ENCODE measurements at regions of chr20 and their contacts with region 1.

Region 1: GRCh38 chr20:38073307-38074071 is 39.9 kb downstream of the RPRD1B start:
- DNase-seq: no peak

Region 2: GRCh38 chr20:37935435-37935834 is 138.1 kb before region 1 on chr20:
- intact Hi-C with region 1: no loop called
- DNase-seq: no peak

Region 3: GRCh38 chr20:38127011-38127621 is 53.6 kb after region 1 on chr20:
- intact Hi-C with region 1: loop called (anchors 5 kb)
- DNase-seq: peak; percentile 75

Region 4: DNA sequence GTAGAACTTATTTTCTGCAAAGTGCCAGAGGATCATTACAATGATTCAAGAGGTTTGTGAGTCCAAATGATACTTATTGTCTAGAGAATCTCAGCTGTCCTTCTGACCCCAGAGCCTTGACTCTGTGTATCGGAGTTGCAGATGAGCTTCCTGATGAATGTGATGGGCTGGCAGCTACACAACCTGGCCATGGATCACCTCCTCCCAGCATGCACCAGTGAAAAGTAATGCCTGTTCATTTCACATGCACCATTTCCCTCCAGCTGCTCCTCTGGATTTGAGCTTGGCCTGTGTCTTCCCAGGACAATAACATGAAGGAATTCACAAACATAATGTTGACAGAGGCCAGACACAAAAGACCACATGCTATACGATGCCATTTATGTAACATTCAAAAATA is 331.6 kb after region 1 on chr20:
- intact Hi-C with region 1: no loop called
- DNase-seq: no peak